ENCODE measurements at regions of chr22 and their contacts with region 1.

Region 1: GRCh38 chr22:24433813-24434470 is 6.5 kb downstream of the ADORA2A start:
- DNase-seq: peak; percentile 90
- ATAC-seq: peak; percentile 82
- H3K4me3 ChIP-seq: peak overlapping the region; percentile 56; the same call in 1 of the 2 replicates
- H3K27ac ChIP-seq: peak overlapping the region; percentile 90
- H3K4me1 ChIP-seq: peaks cover 82% of the 10 kb centered on the region
- H3K27me3 ChIP-seq: no peaks in the 10 kb centered on the region
- CTCF ChIP-seq: no peak
- EP300 ChIP-seq: peak in 1 of 2 experiments; percentile 34; a peak in 1 of 4 replicates
- POLR2A ChIP-seq: peak; percentile 92
- RAD21 ChIP-seq: no peak

Region 2: GRCh38 chr22:24325105-24325757 is 108.7 kb before region 1 on chr22:
- CTCF ChIA-PET with region 1: no interaction called
- POLR2A ChIA-PET with region 1: no interaction called
- RAD21 ChIA-PET with region 1: interaction called, 4 read pairs
- SMC1A ChIA-PET with region 1: interaction called, 3 read pairs
- in situ Hi-C with region 1: no loop called
- intact Hi-C with region 1: loop called (anchors 10 kb)
- DNase-seq: peak; percentile 62
- ATAC-seq: peak; percentile 92
- H3K4me3 ChIP-seq: no peak overlapping the region
- H3K27ac ChIP-seq: peak overlapping the region; percentile 10; the same call in 1 of the 2 replicates
- H3K4me1 ChIP-seq: no peaks in the 10 kb centered on the region
- H3K27me3 ChIP-seq: no peaks in the 10 kb centered on the region
- CTCF ChIP-seq: peak; percentile 70 to 93 (median 75); a peak in 5 of 6 replicates
- EP300 ChIP-seq: no peak
- POLR2A ChIP-seq: no peak
- RAD21 ChIP-seq: peak; percentile 85

Region 3: DNA sequence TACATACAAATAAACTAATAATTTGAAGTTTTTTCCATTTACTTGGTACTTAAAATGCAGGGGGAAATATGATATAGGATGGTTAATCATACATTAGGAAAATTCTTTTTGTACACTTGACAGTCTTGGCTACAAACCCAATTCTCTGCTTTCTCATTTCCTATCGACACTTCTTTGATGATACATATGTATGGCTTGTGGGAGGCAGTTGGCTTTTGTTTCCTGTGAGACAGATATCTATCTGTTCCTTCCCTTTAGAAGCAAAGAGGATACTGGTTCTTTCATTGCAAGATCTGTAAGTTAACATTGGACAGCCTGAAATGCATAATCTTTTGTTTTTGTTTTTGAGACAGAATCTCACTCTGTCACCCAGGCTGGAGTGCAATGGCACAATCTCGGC is 54.4 kb before region 1 on chr22:
- CTCF ChIA-PET with region 1: no interaction called
- POLR2A ChIA-PET with region 1: no interaction called
- RAD21 ChIA-PET with region 1: no interaction called
- SMC1A ChIA-PET with region 1: no interaction called
- in situ Hi-C with region 1: no loop called
- intact Hi-C with region 1: no loop called
- DNase-seq: no peak
- ATAC-seq: no peak
- H3K4me3 ChIP-seq: no peak overlapping the region
- H3K27ac ChIP-seq: no peak overlapping the region
- H3K4me1 ChIP-seq: no peaks in the 10 kb centered on the region
- H3K27me3 ChIP-seq: no peaks in the 10 kb centered on the region
- CTCF ChIP-seq: no peak
- EP300 ChIP-seq: no peak
- POLR2A ChIP-seq: no peak
- RAD21 ChIP-seq: no peak

Region 4: DNA sequence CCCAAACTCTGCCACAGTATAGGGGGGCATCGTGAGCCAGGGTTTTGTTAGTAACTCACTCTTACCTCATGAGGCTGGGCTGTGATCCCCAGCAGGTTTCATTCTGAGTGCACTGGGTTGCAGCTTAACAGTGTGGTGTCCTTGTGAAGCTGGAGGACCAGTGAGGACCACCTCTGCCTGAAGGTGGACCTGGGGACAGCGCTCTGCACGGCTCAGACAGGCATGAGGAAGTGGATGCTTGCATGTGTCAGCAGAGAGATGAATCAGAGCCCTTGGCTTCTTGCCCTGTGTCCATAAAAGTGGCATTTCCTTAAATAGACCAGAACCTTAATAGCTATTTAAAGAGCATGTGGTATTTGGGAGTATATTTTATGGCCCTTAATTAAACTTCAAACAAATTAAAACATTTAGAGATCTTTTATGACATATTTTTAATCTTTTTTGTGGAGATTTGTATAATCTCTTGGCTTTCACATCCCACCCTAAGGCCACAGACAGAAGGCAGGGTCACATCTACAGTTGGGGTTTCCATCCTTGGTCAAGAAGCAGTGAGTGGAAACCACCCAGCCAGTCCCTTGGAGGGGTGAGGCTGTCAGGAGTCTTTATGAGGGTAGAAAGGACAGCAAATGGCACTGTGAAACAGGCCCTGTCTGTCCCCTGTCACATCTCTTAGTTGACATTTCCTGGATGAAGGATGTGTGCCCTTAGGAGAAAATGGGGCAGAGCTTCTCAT is 31.3 kb before region 1 on chr22:
- CTCF ChIA-PET with region 1: interaction called, 5 read pairs
- POLR2A ChIA-PET with region 1: interaction called, 11 read pairs
- RAD21 ChIA-PET with region 1: interaction called, 8 read pairs
- SMC1A ChIA-PET with region 1: interaction called, 14 read pairs
- in situ Hi-C with region 1: no loop called
- intact Hi-C with region 1: no loop called
- DNase-seq: peak; percentile 33
- ATAC-seq: peak; percentile 67
- H3K4me3 ChIP-seq: no peak overlapping the region
- H3K27ac ChIP-seq: peak overlapping the region; percentile 85
- H3K4me1 ChIP-seq: peaks cover 44% of the 10 kb centered on the region
- H3K27me3 ChIP-seq: no peaks in the 10 kb centered on the region
- CTCF ChIP-seq: no peak
- EP300 ChIP-seq: peak; percentile 8 to 23; a peak in 2 of 4 replicates
- POLR2A ChIP-seq: no peak
- RAD21 ChIP-seq: no peak

Region 5: GRCh38 chr22:24460418-24461089 is 26.6 kb after region 1 on chr22:
- CTCF ChIA-PET with region 1: interaction called, 10 read pairs
- POLR2A ChIA-PET with region 1: interaction called, 5 read pairs
- RAD21 ChIA-PET with region 1: interaction called, 13 read pairs
- SMC1A ChIA-PET with region 1: interaction called, 10 read pairs
- in situ Hi-C with region 1: no loop called
- intact Hi-C with region 1: no loop called
- DNase-seq: peak; percentile 42
- ATAC-seq: peak; percentile 97
- H3K4me3 ChIP-seq: no peak overlapping the region
- H3K27ac ChIP-seq: peak overlapping the region; percentile 9
- H3K4me1 ChIP-seq: peaks cover 7% of the 10 kb centered on the region
- H3K27me3 ChIP-seq: no peaks in the 10 kb centered on the region
- CTCF ChIP-seq: no peak
- EP300 ChIP-seq: no peak
- POLR2A ChIP-seq: peak; percentile 52
- RAD21 ChIP-seq: no peak

Region 6: GRCh38 chr22:24516301-24516737 is 82.4 kb after region 1 on chr22:
- CTCF ChIA-PET with region 1: interaction called, 33 read pairs
- POLR2A ChIA-PET with region 1: interaction called, 19 read pairs
- RAD21 ChIA-PET with region 1: interaction called, 6 read pairs
- SMC1A ChIA-PET with region 1: interaction called, 25 read pairs
- in situ Hi-C with region 1: loop called (anchors 5 kb)
- intact Hi-C with region 1: no loop called
- DNase-seq: no peak
- ATAC-seq: peak; percentile 66
- H3K4me3 ChIP-seq: no peak overlapping the region
- H3K27ac ChIP-seq: no peak overlapping the region; the same call in 1 of the 2 replicates
- H3K4me1 ChIP-seq: peaks cover 41% of the 10 kb centered on the region
- H3K27me3 ChIP-seq: no peaks in the 10 kb centered on the region
- CTCF ChIP-seq: no peak
- EP300 ChIP-seq: no peak
- POLR2A ChIP-seq: no peak
- RAD21 ChIP-seq: no peak

Region 7: GRCh38 chr22:24555157-24556039 is 121.5 kb after region 1 on chr22 and contains the start of gene SNRPD3:
- CTCF ChIA-PET with region 1: no interaction called
- POLR2A ChIA-PET with region 1: no interaction called
- RAD21 ChIA-PET with region 1: interaction called, 4 read pairs
- SMC1A ChIA-PET with region 1: no interaction called
- in situ Hi-C with region 1: no loop called
- intact Hi-C with region 1: loop called (anchors 1 kb)
- DNase-seq: peak; percentile 92
- ATAC-seq: peak; percentile 85
- H3K4me3 ChIP-seq: peak within 1 kb of the TSS; percentile 99
- H3K27ac ChIP-seq: peak within 1 kb of the TSS; percentile 99
- H3K4me1 ChIP-seq: peaks cover 14% of the 10 kb centered on the region
- H3K27me3 ChIP-seq: no peaks in the 10 kb centered on the region
- CTCF ChIP-seq: no peak
- EP300 ChIP-seq: peak in 1 of 2 experiments; percentile 39; a peak in 1 of 4 replicates
- POLR2A ChIP-seq: peak; percentile 90
- RAD21 ChIP-seq: no peak
- polyA plus RNA-seq, gene SNRPD3: 244 to 258 TPM